ENCODE measurements at regions of chr7 and their contacts with region 1.

Region 1: GRCh38 chr7:876167-876967 is at the start of gene GET4:
- DNase-seq: peak; percentile 98
- H3K4me3 Mint-ChIP-seq: peak within 1 kb of the TSS; percentile 93
- H3K27ac Mint-ChIP-seq: peak within 1 kb of the TSS; percentile 92
- H3K4me1 Mint-ChIP-seq: peaks cover 16% of the 10 kb centered on the region
- H3K27me3 Mint-ChIP-seq: no peaks in the 10 kb centered on the region
- total RNA-seq, gene GET4: 38.7 and 43.8 TPM in 2 replicates

Region 2: GRCh38 chr7:322111-322671 is 554.2 kb before region 1 on chr7:
- intact Hi-C with region 1: loop called (anchors 1 kb)
- DNase-seq: peak; percentile 78
- H3K4me3 Mint-ChIP-seq: no peak overlapping the region
- H3K27ac Mint-ChIP-seq: no peak overlapping the region
- H3K4me1 Mint-ChIP-seq: no peaks in the 10 kb centered on the region
- H3K27me3 Mint-ChIP-seq: peaks cover 7% of the 10 kb centered on the region

Region 3: DNA sequence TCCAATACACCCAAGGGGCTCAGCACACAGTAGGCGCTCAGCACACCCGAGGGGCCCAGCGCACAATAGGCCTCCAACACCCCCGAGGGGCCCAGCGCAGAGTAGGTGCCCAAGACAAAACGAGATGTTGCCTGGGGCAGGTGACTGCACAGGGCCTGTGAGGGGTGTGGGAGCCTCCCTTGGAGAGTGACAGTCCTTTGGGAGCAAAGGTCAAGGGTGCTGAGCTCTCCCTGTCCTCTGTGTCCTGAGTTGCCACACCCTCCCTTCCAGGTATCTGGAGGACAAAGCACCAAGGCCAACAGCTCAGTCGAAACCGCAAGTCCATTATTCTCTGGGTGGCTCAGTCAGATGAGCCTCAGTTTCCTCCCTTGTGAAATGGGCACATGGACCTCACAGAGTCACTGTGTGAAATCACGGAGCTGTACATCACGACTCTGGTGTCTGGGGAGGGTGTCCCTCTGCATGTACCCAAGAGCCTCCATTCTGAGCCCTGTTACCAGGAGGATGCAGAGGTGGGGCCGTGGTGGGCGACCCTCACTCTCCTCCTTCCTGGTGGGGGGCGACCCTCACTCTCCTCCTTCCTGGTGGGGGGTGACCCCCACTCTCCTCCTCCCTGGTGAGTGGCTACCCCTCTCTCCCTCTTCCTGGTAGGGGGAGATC is 505.1 kb before region 1 on chr7:
- intact Hi-C with region 1: no loop called
- DNase-seq: no peak
- H3K4me3 Mint-ChIP-seq: no peak overlapping the region
- H3K27ac Mint-ChIP-seq: no peak overlapping the region
- H3K4me1 Mint-ChIP-seq: peaks cover 10% of the 10 kb centered on the region
- H3K27me3 Mint-ChIP-seq: peaks cover 3% of the 10 kb centered on the region

Region 4: GRCh38 chr7:552868-553635 is 323.3 kb before region 1 on chr7:
- intact Hi-C with region 1: no loop called
- DNase-seq: no peak
- H3K4me3 Mint-ChIP-seq: no peak overlapping the region
- H3K27ac Mint-ChIP-seq: no peak overlapping the region
- H3K4me1 Mint-ChIP-seq: no peaks in the 10 kb centered on the region
- H3K27me3 Mint-ChIP-seq: no peaks in the 10 kb centered on the region

Region 5: GRCh38 chr7:604001-604883 is 272.1 kb before region 1 on chr7:
- intact Hi-C with region 1: loop called (anchors 2 kb)
- DNase-seq: peak; percentile 89
- H3K4me3 Mint-ChIP-seq: peak overlapping the region; percentile 83
- H3K27ac Mint-ChIP-seq: peak overlapping the region; percentile 99
- H3K4me1 Mint-ChIP-seq: peaks cover 46% of the 10 kb centered on the region
- H3K27me3 Mint-ChIP-seq: no peaks in the 10 kb centered on the region

Region 6: GRCh38 chr7:786472-787255 is 89.7 kb before region 1 on chr7:
- intact Hi-C with region 1: loop called (anchors 1 kb)
- DNase-seq: peak; percentile 28
- H3K4me3 Mint-ChIP-seq: no peak overlapping the region
- H3K27ac Mint-ChIP-seq: no peak overlapping the region
- H3K4me1 Mint-ChIP-seq: no peaks in the 10 kb centered on the region
- H3K27me3 Mint-ChIP-seq: no peaks in the 10 kb centered on the region

Region 7: DNA sequence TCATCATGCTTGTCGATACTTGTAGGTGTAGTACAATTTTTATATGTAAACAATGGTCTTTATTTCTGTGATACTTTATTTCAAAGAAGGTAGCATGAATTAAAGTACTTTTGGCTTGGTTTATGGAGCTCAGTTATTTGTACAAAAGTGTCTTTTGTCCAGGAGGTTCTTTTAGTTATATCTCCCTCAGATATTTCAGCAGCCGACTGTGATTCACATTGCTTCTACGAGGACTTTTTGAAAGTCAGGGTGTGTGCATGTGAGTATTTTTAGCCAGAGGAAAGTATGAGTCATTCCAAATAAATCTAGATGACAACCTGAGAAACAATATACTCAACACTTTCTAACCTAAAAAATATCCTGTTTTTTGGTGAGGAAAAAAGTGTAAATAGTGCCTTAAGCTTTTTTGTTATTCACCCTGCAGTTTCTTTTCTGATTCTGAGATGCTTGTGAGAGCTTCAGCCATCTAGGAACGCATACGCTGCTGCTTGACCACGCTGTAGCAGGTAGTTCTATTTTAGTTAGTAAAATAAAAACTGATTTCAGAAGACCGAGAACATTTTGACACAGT is 44.7 kb before region 1 on chr7:
- intact Hi-C with region 1: loop called (anchors 1 kb)
- DNase-seq: no peak
- H3K4me3 Mint-ChIP-seq: peak overlapping the region; percentile 80
- H3K27ac Mint-ChIP-seq: peak overlapping the region; percentile 93
- H3K4me1 Mint-ChIP-seq: peaks cover 30% of the 10 kb centered on the region
- H3K27me3 Mint-ChIP-seq: no peaks in the 10 kb centered on the region

Region 8: GRCh38 chr7:1044191-1045068 is 168.1 kb after region 1 on chr7 and contains the start of gene GPR146:
- intact Hi-C with region 1: loop called (anchors 1 kb)
- DNase-seq: peak; percentile 85
- H3K4me3 Mint-ChIP-seq: peak within 1 kb of the TSS; percentile 83
- H3K27ac Mint-ChIP-seq: peak within 1 kb of the TSS; percentile 48
- H3K4me1 Mint-ChIP-seq: peaks cover 66% of the 10 kb centered on the region
- H3K27me3 Mint-ChIP-seq: peaks cover 1% of the 10 kb centered on the region
- total RNA-seq, gene GPR146: 2.2 and 2.8 TPM in 2 replicates

Region 9: GRCh38 chr7:1569833-1570633 is 693.7 kb after region 1 on chr7 and contains the start of gene PSMG3:
- intact Hi-C with region 1: loop called (anchors 10 kb)
- DNase-seq: peak; percentile 86
- H3K4me3 Mint-ChIP-seq: peak within 1 kb of the TSS; percentile 89
- H3K27ac Mint-ChIP-seq: peak within 1 kb of the TSS; percentile 81
- H3K4me1 Mint-ChIP-seq: peaks cover 31% of the 10 kb centered on the region
- H3K27me3 Mint-ChIP-seq: no peaks in the 10 kb centered on the region
- total RNA-seq, gene PSMG3: 55.7 and 56.0 TPM in 2 replicates